ENCODE measurements at regions of chr11 and their contacts with region 1.

Region 1: DNA sequence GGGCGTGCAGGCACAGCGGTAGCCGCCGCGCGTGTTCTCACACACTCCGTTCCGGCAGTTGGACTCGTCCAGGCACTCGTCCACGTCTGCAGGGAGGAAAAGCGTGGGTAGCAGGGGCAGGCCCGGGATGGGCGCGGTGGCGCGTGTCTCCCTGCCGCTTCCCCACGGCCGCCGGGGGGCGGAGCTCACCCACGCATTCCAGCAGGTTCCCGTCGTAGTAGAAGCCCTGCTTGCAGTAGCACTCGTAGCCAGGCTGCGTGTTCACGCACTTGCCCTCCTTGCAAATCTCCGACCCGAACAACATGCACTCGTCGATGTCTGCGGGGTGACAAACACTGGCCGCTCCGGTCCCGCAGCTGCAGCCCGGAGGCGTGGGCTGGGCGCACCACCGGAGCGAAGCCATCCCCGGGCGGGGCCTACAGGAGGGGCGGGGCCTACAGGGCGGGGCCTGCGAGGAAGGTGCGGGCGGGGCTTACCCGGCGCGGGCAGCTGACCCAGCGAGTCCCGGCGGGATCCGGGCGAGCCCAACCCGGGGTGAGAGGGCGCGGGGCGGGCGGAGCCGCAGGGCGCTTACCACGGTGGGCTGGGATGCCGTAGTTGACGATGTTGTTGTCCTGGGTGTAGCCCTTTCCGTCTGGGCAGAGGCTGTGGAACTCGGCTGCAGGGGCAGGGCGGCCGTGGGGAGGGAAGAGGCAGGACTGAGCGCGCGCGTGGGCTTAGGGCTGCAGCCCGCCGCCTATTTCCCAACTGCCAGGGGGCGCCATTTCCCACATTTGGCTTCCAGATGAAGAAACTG is 15.6 kb downstream of the SCYL1 start:
- DNase-seq: peak; percentile 97
- ATAC-seq: peak; percentile 87
- H3K4me3 ChIP-seq: peak overlapping the region; percentile 74 to 97 (median 86)
- H3K4me3 Mint-ChIP-seq: peak overlapping the region; percentile 95
- H3K27ac ChIP-seq: peak overlapping the region; percentile 85 to 87
- H3K27ac Mint-ChIP-seq: peak overlapping the region; percentile 96
- H3K4me1 ChIP-seq: peaks cover 12 to 17% of the 10 kb centered on the region in 2 donors
- H3K4me1 Mint-ChIP-seq: peaks cover 24% of the 10 kb centered on the region
- H3K27me3 ChIP-seq: no peaks in the 10 kb centered on the region
- H3K27me3 Mint-ChIP-seq: no peaks in the 10 kb centered on the region
- CTCF ChIP-seq: peak; percentile 63

Region 2: GRCh38 chr11:65117216-65118096 is 423.0 kb before region 1 on chr11 and contains the start of gene ZNHIT2:
- CTCF ChIA-PET with region 1: no interaction called
- POLR2A ChIA-PET with region 1: no interaction called
- intact Hi-C with region 1: loop called (anchors 10 kb)
- DNase-seq: peak; percentile 100
- ATAC-seq: peak; percentile 74
- H3K4me3 ChIP-seq: peak within 1 kb of the TSS; percentile 0 to 80 (median 80)
- H3K4me3 Mint-ChIP-seq: peak within 1 kb of the TSS; percentile 91
- H3K27ac ChIP-seq: peak within 1 kb of the TSS; percentile 69 to 96
- H3K27ac Mint-ChIP-seq: peak within 1 kb of the TSS; percentile 91
- H3K4me1 ChIP-seq: peaks cover 38 to 60% of the 10 kb centered on the region in 2 donors
- H3K4me1 Mint-ChIP-seq: peaks cover 71% of the 10 kb centered on the region
- H3K27me3 ChIP-seq: no peaks in the 10 kb centered on the region
- H3K27me3 Mint-ChIP-seq: no peaks in the 10 kb centered on the region
- CTCF ChIP-seq: peak; percentile 92
- total RNA-seq, gene ZNHIT2: 14.1 and 14.5 TPM in 2 replicates

Region 3: GRCh38 chr11:65524741-65525545 is 15.6 kb before region 1 on chr11 and contains the start of gene SCYL1:
- CTCF ChIA-PET with region 1: interaction called, 14 read pairs
- POLR2A ChIA-PET with region 1: interaction called, 16 read pairs
- intact Hi-C with region 1: loop called (anchors 2 kb)
- DNase-seq: peak; percentile 85
- ATAC-seq: peak; percentile 98
- H3K4me3 ChIP-seq: peak within 1 kb of the TSS; percentile 6 to 94 (median 77)
- H3K4me3 Mint-ChIP-seq: peak within 1 kb of the TSS; percentile 85
- H3K27ac ChIP-seq: peak within 1 kb of the TSS; percentile 53 to 84
- H3K27ac Mint-ChIP-seq: peak within 1 kb of the TSS; percentile 88
- H3K4me1 ChIP-seq: peaks cover 39 to 41% of the 10 kb centered on the region in 2 donors
- H3K4me1 Mint-ChIP-seq: peaks cover 39% of the 10 kb centered on the region
- H3K27me3 ChIP-seq: no peaks in the 10 kb centered on the region
- H3K27me3 Mint-ChIP-seq: no peaks in the 10 kb centered on the region
- CTCF ChIP-seq: no peak
- total RNA-seq, gene SCYL1: 72.3 and 85.5 TPM in 2 replicates

Region 4: DNA sequence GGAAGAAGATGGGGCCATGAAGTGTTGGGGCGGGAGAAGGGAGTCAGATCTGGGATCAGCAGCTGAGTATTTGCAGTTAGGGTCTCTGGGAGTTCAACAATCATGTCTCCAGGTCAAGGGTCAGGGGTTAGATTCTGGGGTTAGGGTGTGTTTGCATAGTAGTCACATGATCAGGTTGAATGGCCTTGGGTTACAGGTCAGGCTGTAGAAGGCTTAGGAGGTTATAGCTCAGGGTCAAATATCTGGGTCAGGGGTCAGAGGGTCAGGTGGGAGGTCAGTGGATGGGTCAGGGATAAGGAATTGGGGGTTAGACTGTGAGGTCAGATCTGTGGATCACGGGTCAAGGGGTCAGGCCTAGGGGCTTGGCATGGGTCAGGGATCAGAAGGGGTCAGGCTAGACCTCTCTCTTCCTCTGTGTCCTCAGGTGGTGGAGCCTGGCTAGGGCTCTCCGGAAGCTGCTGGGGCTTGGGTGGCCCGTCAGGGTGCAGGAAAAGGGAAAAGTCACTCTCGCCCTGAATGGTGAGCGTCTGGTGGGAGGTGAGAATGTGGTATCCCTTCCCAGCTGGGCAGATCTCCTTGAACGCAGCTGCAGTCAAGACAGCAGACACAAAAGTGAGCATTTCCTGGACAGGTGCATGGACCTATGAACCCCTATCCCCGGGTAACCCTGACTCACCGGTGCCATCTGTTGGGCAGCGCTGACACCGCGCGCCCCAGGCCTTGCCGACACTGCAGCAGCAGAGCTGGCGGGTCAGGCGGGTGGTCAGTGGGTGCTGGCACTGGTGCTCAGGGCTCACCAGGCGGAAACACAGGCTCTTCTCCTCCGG is 11.3 kb after region 1 on chr11:
- CTCF ChIA-PET with region 1: interaction called, 108 read pairs
- POLR2A ChIA-PET with region 1: interaction called, 13 read pairs
- intact Hi-C with region 1: loop called (anchors 1 kb)
- DNase-seq: peak; percentile 85
- ATAC-seq: peak; percentile 85
- H3K4me3 ChIP-seq: no peak overlapping the region
- H3K4me3 Mint-ChIP-seq: peak overlapping the region; percentile 61
- H3K27ac ChIP-seq: no peak overlapping the region
- H3K27ac Mint-ChIP-seq: peak overlapping the region; percentile 89
- H3K4me1 ChIP-seq: peaks cover 42 to 64% of the 10 kb centered on the region in 2 donors
- H3K4me1 Mint-ChIP-seq: peaks cover 66% of the 10 kb centered on the region
- H3K27me3 ChIP-seq: no peaks in the 10 kb centered on the region
- H3K27me3 Mint-ChIP-seq: no peaks in the 10 kb centered on the region
- CTCF ChIP-seq: peak; percentile 76

Region 5: GRCh38 chr11:65588199-65589054 is 47.9 kb after region 1 on chr11:
- CTCF ChIA-PET with region 1: interaction called, 144 read pairs
- POLR2A ChIA-PET with region 1: interaction called, 24 read pairs
- intact Hi-C with region 1: loop called (anchors 1 kb)
- DNase-seq: peak; percentile 87
- ATAC-seq: peak; percentile 76
- H3K4me3 ChIP-seq: peak overlapping the region in 3 of 5 experiments; percentile 9 to 26 (median 13)
- H3K4me3 Mint-ChIP-seq: peak overlapping the region; percentile 75
- H3K27ac ChIP-seq: peak overlapping the region; percentile 82 to 92
- H3K27ac Mint-ChIP-seq: peak overlapping the region; percentile 93
- H3K4me1 ChIP-seq: peaks cover 27 to 41% of the 10 kb centered on the region in 2 donors
- H3K4me1 Mint-ChIP-seq: peaks cover 38% of the 10 kb centered on the region
- H3K27me3 ChIP-seq: no peaks in the 10 kb centered on the region
- H3K27me3 Mint-ChIP-seq: no peaks in the 10 kb centered on the region
- CTCF ChIP-seq: peak; percentile 83

Region 6: DNA sequence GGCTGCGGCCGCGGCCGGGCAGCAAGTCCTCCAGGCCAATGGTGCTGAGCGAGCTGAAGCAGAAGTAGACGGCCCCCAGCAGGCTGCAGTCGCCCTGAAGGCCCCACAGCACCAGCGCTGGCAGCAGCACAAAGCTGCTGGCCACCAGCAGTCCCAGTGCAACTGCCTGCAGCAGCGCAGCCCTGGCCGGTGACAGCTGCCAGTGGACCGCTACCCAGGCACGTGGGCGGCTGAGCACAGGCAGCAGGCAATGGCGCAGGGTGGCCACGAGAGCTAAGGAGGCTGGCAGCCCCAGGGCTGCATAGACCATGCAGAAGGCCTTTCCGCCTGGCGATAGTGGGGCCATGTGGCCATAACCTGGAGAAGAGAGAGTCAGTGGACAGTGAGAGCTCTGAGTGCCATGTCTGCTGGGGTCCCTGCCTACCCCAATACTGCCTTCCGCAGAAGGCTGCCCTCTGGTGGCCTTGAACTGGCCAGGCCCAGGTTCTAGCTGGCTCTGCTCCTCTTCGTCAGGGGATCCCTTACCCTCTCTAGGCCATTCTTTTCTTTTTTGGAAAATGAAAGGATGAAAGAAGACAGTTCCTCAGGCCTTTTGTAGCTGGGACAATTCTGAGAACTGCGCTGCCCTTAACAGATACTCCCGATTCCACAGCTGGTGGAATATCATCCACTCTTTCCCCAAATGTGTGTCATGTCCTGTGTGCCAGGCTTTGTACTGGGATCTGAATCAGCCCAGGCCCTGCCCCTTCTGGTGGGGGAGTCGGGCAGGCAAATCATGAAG is 53.2 kb after region 1 on chr11:
- CTCF ChIA-PET with region 1: interaction called, 144 read pairs
- POLR2A ChIA-PET with region 1: interaction called, 24 read pairs
- intact Hi-C with region 1: loop called (anchors 1 kb)
- DNase-seq: peak; percentile 66
- ATAC-seq: peak; percentile 48
- H3K4me3 ChIP-seq: no peak overlapping the region
- H3K4me3 Mint-ChIP-seq: no peak overlapping the region
- H3K27ac ChIP-seq: no peak overlapping the region
- H3K27ac Mint-ChIP-seq: peak overlapping the region; percentile 46
- H3K4me1 ChIP-seq: peaks cover 14 to 30% of the 10 kb centered on the region in 2 donors
- H3K4me1 Mint-ChIP-seq: peaks cover 24% of the 10 kb centered on the region
- H3K27me3 ChIP-seq: no peaks in the 10 kb centered on the region
- H3K27me3 Mint-ChIP-seq: no peaks in the 10 kb centered on the region
- CTCF ChIP-seq: peak; percentile 74

Region 7: GRCh38 chr11:65652511-65653231 is 112.2 kb after region 1 on chr11:
- CTCF ChIA-PET with region 1: interaction called, 4 read pairs
- POLR2A ChIA-PET with region 1: no interaction called
- intact Hi-C with region 1: loop called (anchors 1 kb)
- DNase-seq: peak; percentile 98
- ATAC-seq: peak; percentile 89
- H3K4me3 ChIP-seq: peak overlapping the region; percentile 22 to 74 (median 69)
- H3K4me3 Mint-ChIP-seq: peak overlapping the region; percentile 96
- H3K27ac ChIP-seq: peak overlapping the region; percentile 90 to 93
- H3K27ac Mint-ChIP-seq: peak overlapping the region; percentile 98
- H3K4me1 ChIP-seq: peaks cover 22 to 44% of the 10 kb centered on the region in 2 donors
- H3K4me1 Mint-ChIP-seq: peaks cover 57% of the 10 kb centered on the region
- H3K27me3 ChIP-seq: no peaks in the 10 kb centered on the region
- H3K27me3 Mint-ChIP-seq: no peaks in the 10 kb centered on the region
- CTCF ChIP-seq: no peak

Region 8: DNA sequence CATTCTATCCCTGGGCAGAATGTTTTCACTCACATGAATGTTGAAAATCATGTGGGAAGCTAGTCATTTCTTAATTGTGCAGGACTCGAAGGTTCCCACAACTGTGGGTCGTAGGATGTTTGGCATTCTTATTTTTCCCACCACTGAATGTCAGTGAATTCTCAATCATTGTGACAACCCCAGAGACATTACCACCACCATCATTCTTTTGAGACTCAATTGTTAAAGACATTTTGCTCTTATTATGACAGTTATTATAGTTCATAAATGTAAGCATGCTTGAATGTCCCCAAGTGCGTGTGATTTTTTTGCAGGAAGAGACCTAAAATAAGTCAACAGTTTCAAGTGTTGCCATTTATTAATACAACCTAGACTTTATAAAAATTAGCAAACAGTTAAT is 548.6 kb after region 1 on chr11:
- CTCF ChIA-PET with region 1: no interaction called
- POLR2A ChIA-PET with region 1: no interaction called
- intact Hi-C with region 1: no loop called
- DNase-seq: no peak
- ATAC-seq: no peak
- H3K4me3 ChIP-seq: no peak overlapping the region
- H3K4me3 Mint-ChIP-seq: no peak overlapping the region
- H3K27ac ChIP-seq: peak overlapping the region in 1 of 2 donors; percentile 31
- H3K27ac Mint-ChIP-seq: no peak overlapping the region
- H3K4me1 ChIP-seq: peaks cover 36 to 48% of the 10 kb centered on the region in 2 donors
- H3K4me1 Mint-ChIP-seq: peaks cover 54% of the 10 kb centered on the region
- H3K27me3 ChIP-seq: no peaks in the 10 kb centered on the region
- H3K27me3 Mint-ChIP-seq: no peaks in the 10 kb centered on the region
- CTCF ChIP-seq: no peak